Activated B cell treated with CpG ODN at 0.5 μM for 24 hours (primary cell): ENCODE measurements at regions of chr16 and their contacts with region 1.

Region 1: DNA sequence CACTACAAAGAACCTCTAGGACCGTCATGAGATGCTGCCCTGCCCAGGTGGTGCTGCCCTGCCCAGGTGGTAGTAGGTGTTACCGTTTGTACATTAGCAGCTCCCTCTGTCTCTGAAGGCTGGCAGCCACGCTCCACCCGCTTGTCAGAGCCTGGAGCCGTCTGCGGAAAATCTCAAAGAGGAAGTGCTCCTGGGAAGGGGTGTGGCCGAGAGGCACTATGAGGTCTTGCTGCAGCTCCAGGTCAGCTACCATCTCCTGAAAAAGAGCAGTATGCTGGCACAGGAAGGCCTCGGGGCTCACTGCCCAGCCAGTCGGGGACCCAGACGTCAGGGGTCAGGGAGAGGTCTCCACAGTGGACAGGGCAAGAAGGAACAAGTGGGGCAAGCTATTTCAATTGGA is 28.3 kb downstream of the ZNF276 start:
- DNase-seq: no peak
- ATAC-seq: no peak
- H3K4me3 Mint-ChIP-seq: no peak overlapping the region
- H3K27ac Mint-ChIP-seq: no peak overlapping the region
- H3K4me1 Mint-ChIP-seq: peaks cover 8% of the 10 kb centered on the region
- H3K27me3 Mint-ChIP-seq: no peaks in the 10 kb centered on the region
- CTCF ChIP-seq: no peak

Region 2: GRCh38 chr16:89325861-89326471 is 423.7 kb before region 1 on chr16:
- CTCF ChIA-PET with region 1: no interaction called
- POLR2A ChIA-PET with region 1: no interaction called
- intact Hi-C with region 1: no loop called
- DNase-seq: no peak
- ATAC-seq: peak; percentile 53
- H3K4me3 Mint-ChIP-seq: peak overlapping the region; percentile 2
- H3K27ac Mint-ChIP-seq: peak overlapping the region; percentile 8
- H3K4me1 Mint-ChIP-seq: peaks cover 75% of the 10 kb centered on the region
- H3K27me3 Mint-ChIP-seq: no peaks in the 10 kb centered on the region
- CTCF ChIP-seq: no peak

Region 3: DNA sequence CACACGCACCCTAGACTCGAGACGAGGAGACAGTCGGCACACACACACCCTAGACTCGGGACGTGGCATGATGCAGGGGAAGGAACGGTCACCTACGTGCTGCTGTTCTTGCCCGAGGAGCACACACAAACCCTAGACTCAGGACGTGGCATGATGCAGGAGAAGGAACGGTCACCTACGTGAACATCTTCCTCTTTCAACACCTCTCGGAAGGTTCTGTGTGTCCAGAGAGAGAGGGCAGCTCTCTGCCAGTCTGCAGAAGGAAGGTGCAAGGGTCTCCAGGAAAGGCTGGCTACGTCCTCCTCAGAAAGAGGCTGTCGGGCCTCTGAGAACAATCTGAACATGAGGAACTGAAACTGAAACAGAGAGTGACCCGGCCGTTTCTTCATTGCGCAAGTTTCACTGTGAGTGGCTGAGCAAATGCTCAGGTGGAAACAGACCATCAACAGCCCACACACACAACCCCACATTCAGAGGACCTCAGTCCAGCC is 15.1 kb after region 1 on chr16:
- CTCF ChIA-PET with region 1: no interaction called
- POLR2A ChIA-PET with region 1: interaction called, 5 read pairs
- intact Hi-C with region 1: loop called (anchors 1 kb)
- DNase-seq: peak; percentile 62
- ATAC-seq: peak; percentile 83
- H3K4me3 Mint-ChIP-seq: peak overlapping the region; percentile 88
- H3K27ac Mint-ChIP-seq: peak overlapping the region; percentile 95
- H3K4me1 Mint-ChIP-seq: peaks cover 69% of the 10 kb centered on the region
- H3K27me3 Mint-ChIP-seq: no peaks in the 10 kb centered on the region
- CTCF ChIP-seq: no peak